Transverse colon (tissue), 4 donors: ENCODE measurements at regions of chr5 and their contacts with region 1.

Region 1: DNA sequence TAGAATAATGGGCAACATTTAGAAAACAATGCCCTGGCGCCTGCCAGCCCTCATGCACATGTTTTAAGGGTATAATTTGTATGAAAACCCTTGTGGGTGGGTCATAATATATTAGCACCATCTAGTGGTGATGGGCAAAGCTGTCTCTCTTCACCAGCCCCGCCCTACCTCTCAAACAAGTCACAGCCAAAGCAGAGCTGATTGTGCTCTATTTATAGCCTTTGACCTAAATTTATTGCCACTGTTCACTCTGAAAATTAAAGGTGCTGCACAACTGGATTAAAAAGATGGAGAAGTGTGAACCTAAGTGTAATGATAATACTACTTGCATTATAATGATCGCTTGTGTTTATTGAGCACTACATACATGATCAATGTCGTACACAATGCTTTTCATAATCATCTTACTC is 131.9 kb upstream of the ANKH start:
- DNase-seq: peak; percentile 58
- H3K4me3 ChIP-seq: no peak overlapping the region
- H3K27ac ChIP-seq: no peak overlapping the region
- H3K4me1 ChIP-seq: peaks cover 8 to 25% (median 14%) of the 10 kb centered on the region in 4 donors
- H3K27me3 ChIP-seq: no peaks in the 10 kb centered on the region
- CTCF ChIP-seq: peak; percentile 72 to 84 (median 79)
- EP300 ChIP-seq: no peak
- POLR2A ChIP-seq: no peak

Region 2: DNA sequence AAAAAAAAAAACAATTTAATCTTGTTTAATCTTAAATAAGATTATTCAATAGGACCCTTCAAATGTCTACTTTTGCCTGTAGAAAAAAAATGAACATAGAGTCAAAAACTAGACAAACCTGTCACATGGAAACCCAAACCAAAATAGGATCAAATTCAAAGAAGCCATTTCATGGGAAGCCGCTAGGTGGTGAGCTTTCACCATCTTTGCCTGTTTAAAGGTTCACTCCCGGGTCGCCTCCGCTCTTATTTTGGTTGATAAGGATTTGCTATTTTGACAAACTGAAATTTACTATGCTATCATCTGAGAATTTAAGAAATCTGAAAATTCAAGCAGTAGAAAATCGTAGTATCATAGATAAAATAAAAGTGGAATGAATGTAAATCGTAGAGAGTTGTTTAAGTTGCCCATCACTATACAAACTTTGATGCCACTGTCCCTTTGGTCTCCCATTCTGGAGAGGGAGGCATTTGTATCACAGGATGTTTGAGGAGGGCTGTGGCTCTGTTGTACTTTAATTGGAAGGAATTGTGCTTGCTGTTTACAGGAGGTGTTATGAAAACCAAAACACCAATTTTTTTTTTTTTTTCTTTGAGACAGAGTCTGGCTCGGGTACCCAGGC is 1015.6 kb before region 1 on chr5:
- in situ Hi-C with region 1: loop called in 1 of 4 experiments (anchors 25 kb)
- intact Hi-C with region 1: no loop called
- DNase-seq: peak; percentile 37
- H3K4me3 ChIP-seq: no peak overlapping the region
- H3K27ac ChIP-seq: no peak overlapping the region
- H3K4me1 ChIP-seq: peaks cover 0 to 3% (median 0%) of the 10 kb centered on the region in 4 donors
- H3K27me3 ChIP-seq: no peaks in the 10 kb centered on the region
- CTCF ChIP-seq: peak; percentile 78 to 88 (median 81)
- EP300 ChIP-seq: no peak
- POLR2A ChIP-seq: no peak

Region 3: DNA sequence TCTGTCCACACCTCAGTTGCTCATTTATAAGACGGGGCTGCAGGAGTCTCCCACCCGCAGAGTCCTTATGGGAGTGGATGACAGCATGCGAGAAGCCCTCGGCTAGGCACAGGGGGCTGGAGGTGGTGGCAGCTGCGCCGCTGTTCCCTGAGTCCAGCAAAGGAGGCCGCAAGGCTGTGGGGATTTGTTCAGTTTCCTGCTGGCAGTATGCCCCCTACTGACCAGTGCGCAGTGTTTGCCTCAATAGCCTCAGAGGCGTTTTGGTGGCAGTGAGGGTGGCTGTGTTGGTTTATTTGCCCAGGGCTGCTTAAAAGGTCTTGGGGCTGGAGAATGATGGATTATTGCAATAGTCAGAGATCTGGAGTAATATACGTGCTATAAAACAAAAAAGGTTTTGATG is 598.2 kb before region 1 on chr5:
- in situ Hi-C with region 1: loop called in 1 of 4 experiments (anchors 25 kb)
- intact Hi-C with region 1: no loop called
- DNase-seq: no peak
- H3K4me3 ChIP-seq: no peak overlapping the region
- H3K27ac ChIP-seq: peak overlapping the region in 3 of 4 donors; percentile 29 to 63 (median 52)
- H3K4me1 ChIP-seq: peaks cover 0 to 5% (median 2%) of the 10 kb centered on the region in 4 donors
- H3K27me3 ChIP-seq: no peaks in the 10 kb centered on the region
- CTCF ChIP-seq: peak in 2 of 5 experiments; percentile 22 to 38
- EP300 ChIP-seq: no peak
- POLR2A ChIP-seq: no peak

Region 4: DNA sequence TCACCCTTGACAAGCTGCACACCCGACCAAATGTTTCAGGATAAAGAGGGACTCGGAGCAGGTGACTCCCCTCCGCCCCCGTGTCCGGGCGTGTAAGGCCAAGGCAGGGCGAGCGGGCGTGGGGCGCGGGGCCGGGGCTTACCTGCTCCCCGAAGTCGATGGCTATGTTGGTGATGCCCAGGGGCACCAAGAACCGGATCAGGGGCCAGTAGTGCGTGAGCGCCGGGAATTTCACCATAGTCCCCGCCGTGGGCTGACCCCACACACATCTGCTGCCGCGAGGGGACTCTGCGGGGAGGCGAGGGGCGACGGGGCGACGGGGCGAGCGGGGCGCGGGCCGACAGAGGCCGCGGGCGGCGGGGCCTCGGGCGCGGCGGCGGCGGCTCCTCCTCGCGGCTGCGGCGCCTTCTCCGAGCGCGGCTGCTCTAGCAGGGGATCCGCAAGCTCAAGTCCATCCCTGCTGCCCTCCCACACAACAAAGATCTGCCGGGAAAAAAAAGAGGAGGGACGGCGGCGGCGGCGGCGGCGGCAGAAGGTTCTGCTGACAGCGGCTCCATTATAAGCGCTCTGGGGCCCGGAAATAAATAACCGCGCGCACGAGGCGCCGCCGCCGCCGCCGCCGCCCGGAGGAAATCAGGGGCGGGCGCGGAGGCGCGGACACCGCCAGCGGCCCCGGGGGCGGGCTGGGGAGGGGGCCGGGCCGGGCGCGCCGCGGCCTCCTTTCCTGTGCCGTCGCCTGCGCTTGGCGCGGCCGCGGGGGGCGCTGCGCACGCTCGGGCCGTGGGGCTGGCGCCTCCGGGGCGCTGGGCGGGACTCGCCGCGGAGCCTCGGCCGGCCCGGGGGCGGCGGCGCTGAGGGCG is 132.1 kb before region 1 on chr5 and contains the start of gene ANKH:
- in situ Hi-C with region 1: loop called in 2 of 4 experiments (anchors 5 to 10 kb)
- intact Hi-C with region 1: no loop called
- DNase-seq: peak; percentile 87
- H3K4me3 ChIP-seq: peak within 1 kb of the TSS; percentile 73 to 96 (median 90)
- H3K27ac ChIP-seq: peak within 1 kb of the TSS; percentile 88 to 99 (median 96)
- H3K4me1 ChIP-seq: peaks cover 0 to 43% (median 13%) of the 10 kb centered on the region in 4 donors
- H3K27me3 ChIP-seq: no peaks in the 10 kb centered on the region
- CTCF ChIP-seq: peak in 2 of 5 experiments; percentile 1 to 13
- EP300 ChIP-seq: no peak
- POLR2A ChIP-seq: no peak
- total RNA-seq, gene ANKH: 24.7 to 96.5 (median 69.4) TPM

Region 5: DNA sequence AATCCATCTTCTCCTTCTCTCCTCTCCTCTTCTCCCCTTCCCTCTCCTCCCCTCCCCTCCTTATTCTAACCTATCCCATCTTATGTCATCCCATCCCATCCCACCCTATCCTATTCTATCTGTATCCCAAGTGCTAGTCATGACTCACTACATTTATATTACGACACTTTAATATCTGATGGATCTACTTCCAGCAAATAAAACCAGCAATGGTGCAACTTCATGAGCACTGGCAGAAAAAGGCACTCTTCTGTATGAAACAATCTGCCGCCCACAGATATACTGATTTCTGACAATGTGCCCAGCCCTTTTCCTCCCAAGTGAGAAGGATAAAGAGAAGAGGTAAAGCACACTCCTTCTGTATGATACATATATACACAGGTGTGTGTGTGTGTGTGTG is 45.3 kb before region 1 on chr5:
- in situ Hi-C with region 1: loop called in 1 of 4 experiments (anchors 10 kb)
- intact Hi-C with region 1: no loop called
- DNase-seq: no peak
- H3K4me3 ChIP-seq: no peak overlapping the region
- H3K27ac ChIP-seq: no peak overlapping the region
- H3K4me1 ChIP-seq: no peaks in the 10 kb centered on the region
- H3K27me3 ChIP-seq: no peaks in the 10 kb centered on the region
- CTCF ChIP-seq: no peak
- EP300 ChIP-seq: no peak
- POLR2A ChIP-seq: no peak